CD4-positive, alpha-beta T cell (primary cell): ENCODE measurements at regions of chr19 and their contacts with region 1.

Region 1: DNA sequence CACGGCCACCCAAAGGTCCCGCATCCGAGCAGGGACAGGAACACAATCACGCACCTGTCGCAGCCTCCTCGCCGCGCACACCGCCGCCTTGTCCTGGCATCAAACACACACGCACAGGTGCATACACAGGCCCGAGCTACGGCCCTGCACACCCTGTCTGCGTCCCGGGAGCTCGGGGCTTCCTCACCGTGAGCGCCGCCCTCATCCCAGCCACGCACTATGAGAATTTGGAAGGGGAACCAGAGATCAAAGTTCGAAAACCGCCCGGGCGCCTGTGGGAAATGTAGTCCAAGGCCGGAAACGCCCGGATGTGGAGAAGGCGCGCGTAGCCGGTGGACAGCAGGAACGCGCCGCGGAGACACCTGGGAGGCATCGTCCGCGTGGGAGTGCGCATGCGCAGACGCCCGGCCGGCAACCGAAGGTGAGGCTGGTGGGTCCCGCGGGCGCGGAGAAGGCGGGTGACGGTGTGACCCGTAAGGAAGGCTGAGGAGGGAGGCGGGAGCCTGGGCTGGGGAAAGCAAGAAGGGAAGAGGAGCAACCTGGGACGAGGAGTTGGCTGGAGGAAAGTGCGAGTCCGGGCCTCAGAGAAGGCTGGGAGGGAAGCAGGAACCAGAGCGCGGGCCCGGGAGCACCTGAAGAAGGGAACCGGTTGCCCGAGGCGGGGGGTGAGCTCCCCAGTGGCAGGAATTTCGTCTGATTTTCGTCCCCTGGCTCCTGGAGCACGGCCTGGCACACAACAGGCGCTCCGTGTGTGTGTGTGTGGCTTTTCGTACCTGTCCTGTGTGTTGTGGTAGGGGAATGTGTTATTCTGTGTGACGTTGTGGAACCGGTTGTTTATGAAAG is at the start of gene ZNF567:
- DNase-seq: peak; percentile 94 to 99 (median 97)
- ATAC-seq: peak; percentile 93
- H3K4me3 ChIP-seq: peak within 1 kb of the TSS; percentile 67
- H3K4me3 Mint-ChIP-seq: peak within 1 kb of the TSS; percentile 99
- H3K27ac ChIP-seq: peak within 1 kb of the TSS; percentile 47 to 56
- H3K27ac Mint-ChIP-seq: peak within 1 kb of the TSS; percentile 97
- H3K4me1 ChIP-seq: peaks cover 23% of the 10 kb centered on the region
- H3K4me1 Mint-ChIP-seq: peaks cover 40% of the 10 kb centered on the region
- H3K27me3 ChIP-seq: no peaks in the 10 kb centered on the region
- H3K27me3 Mint-ChIP-seq: no peaks in the 10 kb centered on the region
- CTCF ChIP-seq: no peak
- total RNA-seq, gene ZNF567: 7.3 to 7.6 TPM

Region 2: DNA sequence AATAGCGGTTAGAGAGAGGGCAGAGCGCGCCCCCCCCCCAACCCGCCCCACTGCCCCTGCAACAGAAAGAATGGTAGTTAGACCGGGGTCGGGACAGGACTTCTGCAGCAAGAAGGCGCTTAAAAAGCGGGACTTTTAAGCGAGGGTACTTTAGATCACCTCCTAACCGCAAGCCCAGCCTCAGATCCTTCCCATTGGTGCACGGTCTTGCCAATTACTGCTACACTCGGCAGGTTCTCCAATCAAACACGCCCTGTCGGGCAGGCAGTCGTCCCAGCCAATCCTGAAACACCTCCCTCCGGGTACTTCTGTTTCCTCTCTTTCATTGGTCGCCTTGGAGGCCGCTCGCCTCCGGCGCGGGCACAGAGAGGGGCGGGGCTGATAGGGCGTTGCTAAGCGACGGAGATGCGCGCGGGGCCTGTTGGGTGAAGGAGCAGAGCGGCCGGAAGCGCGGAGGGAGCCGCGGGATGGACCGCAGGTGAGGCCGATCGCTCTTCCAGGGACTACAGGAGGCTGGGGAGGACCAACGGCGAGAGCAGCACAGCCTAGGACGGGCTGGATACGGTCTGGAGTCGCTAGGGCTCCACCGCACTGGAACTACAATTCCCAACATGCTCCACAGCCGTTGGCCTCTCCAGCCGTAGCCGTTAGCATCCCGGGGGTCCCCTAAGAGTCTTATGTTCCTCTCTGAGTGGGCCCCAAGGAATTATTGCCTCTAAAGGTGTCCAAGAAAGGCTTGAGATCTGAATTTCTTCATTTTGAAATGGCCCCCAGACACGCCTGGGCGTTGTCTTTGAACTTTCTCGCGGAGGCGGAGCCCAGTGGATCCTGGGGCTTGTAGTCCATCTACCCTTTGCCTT is 929.5 kb before region 1 on chr19 and contains the start of gene PROSER3:
- CTCF ChIA-PET with region 1: no interaction called
- POLR2A ChIA-PET with region 1: no interaction called
- intact Hi-C with region 1: loop called in 1 of 2 experiments (anchors 10 kb)
- DNase-seq: peak; percentile 95 to 100 (median 98)
- ATAC-seq: peak; percentile 96
- H3K4me3 ChIP-seq: peak within 1 kb of the TSS; percentile 81
- H3K4me3 Mint-ChIP-seq: peak within 1 kb of the TSS; percentile 99
- H3K27ac ChIP-seq: peak within 1 kb of the TSS; percentile 61 to 97
- H3K27ac Mint-ChIP-seq: peak within 1 kb of the TSS; percentile 88
- H3K4me1 ChIP-seq: peaks cover 43% of the 10 kb centered on the region
- H3K4me1 Mint-ChIP-seq: peaks cover 41% of the 10 kb centered on the region
- H3K27me3 ChIP-seq: peaks cover 0 to 2% of the 10 kb centered on the region in 2 experiments
- H3K27me3 Mint-ChIP-seq: peaks cover 15% of the 10 kb centered on the region
- CTCF ChIP-seq: no peak
- total RNA-seq, gene PROSER3: 19.4 to 22.6 TPM

Region 3: GRCh38 chr19:36266342-36266961 is 421.0 kb before region 1 on chr19:
- CTCF ChIA-PET with region 1: no interaction called
- POLR2A ChIA-PET with region 1: no interaction called
- intact Hi-C with region 1: no loop called
- DNase-seq: no peak
- ATAC-seq: no peak
- H3K4me3 ChIP-seq: no peak overlapping the region
- H3K4me3 Mint-ChIP-seq: no peak overlapping the region
- H3K27ac ChIP-seq: no peak overlapping the region
- H3K27ac Mint-ChIP-seq: no peak overlapping the region
- H3K4me1 ChIP-seq: no peaks in the 10 kb centered on the region
- H3K4me1 Mint-ChIP-seq: no peaks in the 10 kb centered on the region
- H3K27me3 ChIP-seq: no peaks in the 10 kb centered on the region
- H3K27me3 Mint-ChIP-seq: no peaks in the 10 kb centered on the region
- CTCF ChIP-seq: no peak

Region 4: DNA sequence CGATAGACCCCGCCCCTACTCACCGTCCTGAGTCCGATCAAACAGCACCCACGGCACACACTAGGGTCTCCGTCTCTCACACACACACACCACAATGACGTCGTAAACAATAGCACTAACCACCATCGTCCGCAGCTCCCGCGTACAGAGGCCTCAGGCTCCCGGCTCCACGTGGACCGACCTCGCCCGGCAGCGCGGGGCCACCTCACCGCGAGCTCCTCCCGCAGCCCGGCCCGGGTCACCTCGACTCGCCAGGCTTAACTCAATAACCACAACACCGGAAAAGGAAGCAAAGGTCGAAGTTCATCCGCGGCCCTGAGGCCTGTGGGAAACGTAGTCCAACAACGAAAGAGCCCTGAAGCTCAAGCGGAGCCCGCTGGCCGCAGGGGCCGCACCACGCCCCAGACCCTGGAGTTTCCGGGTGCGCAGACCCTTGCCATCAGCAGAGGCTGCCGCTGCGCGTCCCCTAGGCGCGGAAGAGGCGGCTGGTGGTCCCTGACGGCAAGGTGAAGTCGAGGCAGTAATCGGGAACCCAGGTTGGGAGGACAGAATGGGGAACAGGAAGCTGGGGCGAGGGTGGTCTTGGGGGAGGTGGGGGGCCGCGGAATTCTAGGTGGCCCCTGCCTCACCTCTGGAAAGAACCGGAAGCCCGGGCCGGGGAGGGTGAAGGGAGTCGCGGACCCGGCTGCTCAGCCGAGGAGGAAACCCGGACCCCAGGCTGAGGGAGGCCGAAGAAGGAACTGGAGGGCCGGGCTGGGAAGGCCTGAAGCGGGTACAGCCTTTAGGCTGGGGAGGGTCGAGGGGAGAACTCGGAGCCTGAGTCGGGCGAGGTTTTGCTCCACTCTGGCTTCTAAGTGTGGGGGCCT is 114.2 kb before region 1 on chr19 and contains the start of gene ZNF529:
- CTCF ChIA-PET with region 1: no interaction called
- POLR2A ChIA-PET with region 1: interaction called, 5 read pairs
- intact Hi-C with region 1: loop called in 1 of 2 experiments (anchors 5 kb)
- DNase-seq: peak; percentile 69 to 94 (median 78)
- ATAC-seq: peak; percentile 92
- H3K4me3 ChIP-seq: peak within 1 kb of the TSS; percentile 88
- H3K4me3 Mint-ChIP-seq: peak within 1 kb of the TSS; percentile 94
- H3K27ac ChIP-seq: peak within 1 kb of the TSS; percentile 89 to 97
- H3K27ac Mint-ChIP-seq: peak within 1 kb of the TSS; percentile 93
- H3K4me1 ChIP-seq: peaks cover 25% of the 10 kb centered on the region
- H3K4me1 Mint-ChIP-seq: peaks cover 39% of the 10 kb centered on the region
- H3K27me3 ChIP-seq: no peaks in the 10 kb centered on the region
- H3K27me3 Mint-ChIP-seq: no peaks in the 10 kb centered on the region
- CTCF ChIP-seq: no peak
- total RNA-seq, gene ZNF529: 39.6 to 42.7 TPM

Region 5: GRCh38 chr19:36635342-36635741 is 52.1 kb before region 1 on chr19:
- CTCF ChIA-PET with region 1: no interaction called
- POLR2A ChIA-PET with region 1: no interaction called
- intact Hi-C with region 1: no loop called
- DNase-seq: no peak
- ATAC-seq: no peak
- H3K4me3 ChIP-seq: no peak overlapping the region
- H3K4me3 Mint-ChIP-seq: no peak overlapping the region
- H3K27ac ChIP-seq: no peak overlapping the region
- H3K27ac Mint-ChIP-seq: no peak overlapping the region
- H3K4me1 ChIP-seq: no peaks in the 10 kb centered on the region
- H3K4me1 Mint-ChIP-seq: no peaks in the 10 kb centered on the region
- H3K27me3 ChIP-seq: no peaks in the 10 kb centered on the region
- H3K27me3 Mint-ChIP-seq: no peaks in the 10 kb centered on the region
- CTCF ChIP-seq: no peak

Region 6: GRCh38 chr19:36665832-36666231 is 21.6 kb before region 1 on chr19:
- CTCF ChIA-PET with region 1: no interaction called
- POLR2A ChIA-PET with region 1: interaction called, 15 read pairs
- intact Hi-C with region 1: loop called (anchors 1 kb)
- DNase-seq: no peak
- ATAC-seq: no peak
- H3K4me3 ChIP-seq: peak overlapping the region; percentile 97
- H3K4me3 Mint-ChIP-seq: peak overlapping the region; percentile 98
- H3K27ac ChIP-seq: no peak overlapping the region
- H3K27ac Mint-ChIP-seq: peak overlapping the region; percentile 92
- H3K4me1 ChIP-seq: peaks cover 24% of the 10 kb centered on the region
- H3K4me1 Mint-ChIP-seq: peaks cover 45% of the 10 kb centered on the region
- H3K27me3 ChIP-seq: no peaks in the 10 kb centered on the region
- H3K27me3 Mint-ChIP-seq: no peaks in the 10 kb centered on the region
- CTCF ChIP-seq: no peak

Region 7: DNA sequence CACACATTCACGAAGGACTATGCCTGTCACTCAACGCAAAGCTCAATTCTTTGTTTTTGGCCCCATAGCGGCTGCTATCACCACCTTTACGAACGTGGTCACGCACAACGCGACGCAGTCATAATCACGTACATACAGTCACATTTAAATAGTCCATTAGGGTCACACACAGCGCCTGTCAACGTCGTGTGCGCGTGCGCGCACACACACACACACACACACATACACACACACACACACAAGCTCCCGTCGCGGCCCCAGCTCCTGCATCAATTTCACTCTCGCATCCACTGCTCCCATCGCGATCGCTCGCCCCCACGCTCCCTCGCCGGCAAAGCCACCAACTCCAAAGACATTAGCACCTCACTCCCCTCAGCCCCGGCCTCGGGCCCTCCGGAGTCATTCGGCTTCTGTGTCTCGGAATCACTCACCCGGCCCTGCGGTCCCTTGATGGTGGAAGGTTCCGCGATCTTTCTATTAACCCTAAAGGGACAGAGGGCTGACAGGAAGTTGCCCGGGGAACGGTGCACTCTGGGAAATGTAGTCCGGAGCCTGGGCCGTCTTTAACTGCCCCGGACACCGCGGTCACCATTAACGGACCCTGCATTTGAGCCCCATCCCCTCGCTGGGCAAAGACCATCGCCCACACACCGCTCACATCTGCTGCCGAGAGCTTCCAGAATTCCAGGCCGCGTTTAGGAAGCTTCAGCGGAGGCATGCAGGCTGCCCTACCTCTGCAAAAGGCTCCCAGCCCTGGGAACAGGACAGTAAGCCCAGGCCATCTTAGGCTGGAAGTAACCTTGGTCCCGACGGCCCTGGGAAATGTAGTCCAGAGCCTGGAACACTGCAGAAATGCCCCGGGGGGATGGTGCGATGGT is 150.7 kb after region 1 on chr19 and contains the start of gene ZNF790:
- CTCF ChIA-PET with region 1: no interaction called
- POLR2A ChIA-PET with region 1: interaction called, 7 read pairs
- intact Hi-C with region 1: loop called in 1 of 2 experiments (anchors 5 kb)
- DNase-seq: peak; percentile 69 to 91 (median 78)
- ATAC-seq: peak; percentile 88
- H3K4me3 ChIP-seq: peak within 1 kb of the TSS; percentile 66
- H3K4me3 Mint-ChIP-seq: no peak within 1 kb of the TSS
- H3K27ac ChIP-seq: peak within 1 kb of the TSS; percentile 81 to 90
- H3K27ac Mint-ChIP-seq: no peak within 1 kb of the TSS
- H3K4me1 ChIP-seq: peaks cover 18% of the 10 kb centered on the region
- H3K4me1 Mint-ChIP-seq: peaks cover 9% of the 10 kb centered on the region
- H3K27me3 ChIP-seq: no peaks in the 10 kb centered on the region
- H3K27me3 Mint-ChIP-seq: no peaks in the 10 kb centered on the region
- CTCF ChIP-seq: no peak
- total RNA-seq, gene ZNF790: 2.9 to 3.5 TPM

Region 8: DNA sequence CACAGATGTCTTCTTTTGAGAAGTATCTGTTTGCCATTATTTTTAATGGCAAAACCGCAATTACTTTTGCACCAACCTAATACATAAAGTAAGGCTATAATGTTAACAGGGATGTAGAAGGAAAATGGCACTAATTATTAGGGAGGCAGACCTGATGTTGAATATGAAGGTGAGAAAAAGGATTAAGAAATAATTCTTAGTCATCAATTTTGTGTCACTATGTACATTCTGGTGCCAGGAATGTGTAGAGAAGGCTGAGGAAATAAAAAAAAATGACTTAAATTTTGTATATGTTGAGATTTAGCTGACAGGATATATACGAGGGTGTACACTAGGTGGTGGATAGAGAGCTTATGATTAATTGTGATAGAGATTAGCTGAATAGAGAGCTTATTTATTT is 510.3 kb after region 1 on chr19:
- CTCF ChIA-PET with region 1: no interaction called
- POLR2A ChIA-PET with region 1: no interaction called
- intact Hi-C with region 1: no loop called
- DNase-seq: no peak
- ATAC-seq: no peak
- H3K4me3 ChIP-seq: no peak overlapping the region
- H3K4me3 Mint-ChIP-seq: no peak overlapping the region
- H3K27ac ChIP-seq: no peak overlapping the region
- H3K27ac Mint-ChIP-seq: no peak overlapping the region
- H3K4me1 ChIP-seq: no peaks in the 10 kb centered on the region
- H3K4me1 Mint-ChIP-seq: no peaks in the 10 kb centered on the region
- H3K27me3 ChIP-seq: no peaks in the 10 kb centered on the region
- H3K27me3 Mint-ChIP-seq: no peaks in the 10 kb centered on the region
- CTCF ChIP-seq: no peak